H1 (cell line): ENCODE measurements at regions of chr13 and their contacts with region 1.

Region 1: GRCh38 chr13:52128714-52129700 is at the start of gene NEK5:
- DNase-seq: peak; percentile 46 to 93
- H3K4me3 ChIP-seq: peak within 1 kb of the TSS; percentile 46 to 78 (median 70)
- H3K27ac ChIP-seq: no peak within 1 kb of the TSS
- H3K4me1 ChIP-seq: no peaks in the 10 kb centered on the region
- H3K27me3 ChIP-seq: peaks cover 0 to 10% (median 2%) of the 10 kb centered on the region in 4 experiments; a peak in 2 of 7 replicates
- CTCF ChIP-seq: peak; percentile 62 to 86 (median 76)
- EP300 ChIP-seq: no peak
- POLR2A ChIP-seq: no peak
- RAD21 ChIP-seq: peak; percentile 81 to 87
- total RNA-seq, gene NEK5: 0.27 and 0.35 TPM in 2 replicates

Region 2: DNA sequence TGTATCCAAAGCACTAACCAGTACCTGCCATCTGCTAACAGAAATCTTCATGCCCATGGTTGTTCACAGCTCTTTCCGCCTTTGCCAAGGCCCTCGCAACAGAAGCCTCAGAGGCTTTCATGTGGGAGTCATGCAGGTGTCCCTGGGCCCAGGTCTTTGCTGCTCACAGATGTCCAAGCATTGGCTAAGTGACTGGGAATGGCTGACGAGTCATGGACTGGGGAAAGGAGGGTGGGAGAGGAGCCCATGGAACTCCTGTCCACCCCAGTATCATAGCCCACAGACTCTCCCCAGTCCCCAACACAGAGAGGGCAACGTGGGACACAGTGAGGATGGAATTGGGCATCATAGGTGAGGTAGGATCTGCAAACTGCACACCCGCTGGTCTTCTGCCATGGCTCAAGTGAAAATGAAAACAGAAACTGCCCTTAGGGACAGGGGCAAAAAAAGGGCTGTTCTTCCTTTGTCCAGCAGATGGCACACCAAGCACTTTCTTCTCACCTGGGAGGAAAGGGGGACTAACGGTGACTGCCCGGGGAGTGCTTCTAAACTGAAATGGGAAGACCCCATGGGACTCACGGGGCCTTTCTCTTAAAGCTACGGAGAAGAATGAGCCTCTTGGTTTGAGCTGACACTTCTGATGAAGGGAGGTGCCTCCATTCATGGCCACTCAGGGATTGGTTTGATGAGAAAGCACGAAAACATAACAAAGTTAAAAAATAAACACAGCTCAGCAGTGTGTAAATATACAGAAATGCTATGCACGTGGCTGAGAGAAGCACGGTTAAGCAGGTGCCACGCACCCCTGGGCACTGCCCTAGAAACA is 314.0 kb before region 1 on chr13:
- CTCF ChIA-PET with region 1: interaction called, 11 read pairs
- POLR2A ChIA-PET with region 1: no interaction called
- DNase-seq: peak in 1 of 2 experiments; percentile 90
- H3K4me3 ChIP-seq: peak overlapping the region in 1 of 4 experiments; percentile 8; a peak in 1 of 8 replicates
- H3K27ac ChIP-seq: no peak overlapping the region
- H3K4me1 ChIP-seq: peaks cover 0 to 16% (median 7%) of the 10 kb centered on the region in 4 experiments; a peak in 5 of 7 replicates
- H3K27me3 ChIP-seq: peaks cover 0 to 3% (median 1%) of the 10 kb centered on the region in 4 experiments; a peak in 2 of 7 replicates
- CTCF ChIP-seq: peak; percentile 60 to 92 (median 86)
- EP300 ChIP-seq: no peak
- POLR2A ChIP-seq: no peak
- RAD21 ChIP-seq: peak; percentile 85 to 94

Region 3: GRCh38 chr13:51911860-51912510 is 217.0 kb before region 1 on chr13:
- CTCF ChIA-PET with region 1: interaction called, 20 read pairs
- POLR2A ChIA-PET with region 1: no interaction called
- DNase-seq: no peak
- H3K4me3 ChIP-seq: no peak overlapping the region
- H3K27ac ChIP-seq: no peak overlapping the region
- H3K4me1 ChIP-seq: no peaks in the 10 kb centered on the region; a peak in 2 of 7 replicates
- H3K27me3 ChIP-seq: no peaks in the 10 kb centered on the region
- CTCF ChIP-seq: no peak
- EP300 ChIP-seq: no peak
- POLR2A ChIP-seq: no peak
- RAD21 ChIP-seq: no peak

Region 4: GRCh38 chr13:51959773-51960172 is 169.2 kb before region 1 on chr13:
- CTCF ChIA-PET with region 1: interaction called, 14 read pairs
- POLR2A ChIA-PET with region 1: no interaction called
- DNase-seq: no peak
- H3K4me3 ChIP-seq: no peak overlapping the region
- H3K27ac ChIP-seq: no peak overlapping the region
- H3K4me1 ChIP-seq: no peaks in the 10 kb centered on the region
- H3K27me3 ChIP-seq: no peaks in the 10 kb centered on the region
- CTCF ChIP-seq: no peak
- EP300 ChIP-seq: no peak
- POLR2A ChIP-seq: no peak
- RAD21 ChIP-seq: no peak

Region 5: GRCh38 chr13:52118595-52118994 is 10.4 kb before region 1 on chr13:
- CTCF ChIA-PET with region 1: interaction called, 42 read pairs
- POLR2A ChIA-PET with region 1: no interaction called
- DNase-seq: no peak
- H3K4me3 ChIP-seq: no peak overlapping the region
- H3K27ac ChIP-seq: no peak overlapping the region
- H3K4me1 ChIP-seq: no peaks in the 10 kb centered on the region
- H3K27me3 ChIP-seq: no peaks in the 10 kb centered on the region
- CTCF ChIP-seq: no peak
- EP300 ChIP-seq: no peak
- POLR2A ChIP-seq: no peak
- RAD21 ChIP-seq: no peak